ENCODE measurements at regions of chr12 and their contacts with region 1.

Region 1: GRCh38 chr12:62259993-62260732 is at the start of gene USP15:
- DNase-seq: peak; percentile 98
- H3K4me3 ChIP-seq: peak within 1 kb of the TSS; percentile 72 to 93 (median 89)
- H3K27ac ChIP-seq: peak within 1 kb of the TSS; percentile 86 to 94 (median 90)
- H3K4me1 ChIP-seq: peaks cover 0 to 46% (median 33%) of the 10 kb centered on the region in 4 donors
- H3K27me3 ChIP-seq: no peaks in the 10 kb centered on the region
- CTCF ChIP-seq: peak; percentile 22 to 56 (median 51)
- EP300 ChIP-seq: peak in 1 of 4 donors; percentile 46
- POLR2A ChIP-seq: peak; percentile 25 to 44
- total RNA-seq, gene USP15: 63.7 to 78.4 (median 73.1) TPM

Region 2: GRCh38 chr12:62044450-62045135 is 215.6 kb before region 1 on chr12:
- intact Hi-C with region 1: no loop called
- DNase-seq: no peak
- H3K4me3 ChIP-seq: no peak overlapping the region
- H3K27ac ChIP-seq: no peak overlapping the region
- H3K4me1 ChIP-seq: no peaks in the 10 kb centered on the region
- H3K27me3 ChIP-seq: no peaks in the 10 kb centered on the region
- CTCF ChIP-seq: no peak
- EP300 ChIP-seq: no peak
- POLR2A ChIP-seq: no peak

Region 3: DNA sequence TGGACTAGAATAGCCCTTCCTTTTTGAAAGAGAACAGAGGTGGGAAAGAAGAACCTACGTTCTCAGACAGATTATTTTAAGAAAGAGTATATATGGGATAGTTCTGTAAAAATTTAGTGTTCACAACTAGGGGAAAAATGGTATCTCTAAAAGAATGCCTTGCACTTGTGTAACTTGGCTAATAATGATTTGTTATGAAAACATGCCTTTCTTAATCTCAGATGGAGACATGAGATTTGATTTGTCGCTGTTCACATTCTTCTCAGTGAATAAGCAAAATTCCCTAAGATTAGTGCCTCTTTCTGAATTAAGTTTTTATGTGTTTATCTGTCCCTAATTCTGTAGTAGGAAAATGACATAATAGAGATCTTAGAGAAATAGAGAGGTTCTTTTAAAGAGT is 100.9 kb after region 1 on chr12:
- intact Hi-C with region 1: loop called (anchors 10 kb)
- DNase-seq: no peak
- H3K4me3 ChIP-seq: no peak overlapping the region
- H3K27ac ChIP-seq: no peak overlapping the region
- H3K4me1 ChIP-seq: no peaks in the 10 kb centered on the region
- H3K27me3 ChIP-seq: no peaks in the 10 kb centered on the region
- CTCF ChIP-seq: no peak
- EP300 ChIP-seq: no peak
- POLR2A ChIP-seq: no peak

Region 4: DNA sequence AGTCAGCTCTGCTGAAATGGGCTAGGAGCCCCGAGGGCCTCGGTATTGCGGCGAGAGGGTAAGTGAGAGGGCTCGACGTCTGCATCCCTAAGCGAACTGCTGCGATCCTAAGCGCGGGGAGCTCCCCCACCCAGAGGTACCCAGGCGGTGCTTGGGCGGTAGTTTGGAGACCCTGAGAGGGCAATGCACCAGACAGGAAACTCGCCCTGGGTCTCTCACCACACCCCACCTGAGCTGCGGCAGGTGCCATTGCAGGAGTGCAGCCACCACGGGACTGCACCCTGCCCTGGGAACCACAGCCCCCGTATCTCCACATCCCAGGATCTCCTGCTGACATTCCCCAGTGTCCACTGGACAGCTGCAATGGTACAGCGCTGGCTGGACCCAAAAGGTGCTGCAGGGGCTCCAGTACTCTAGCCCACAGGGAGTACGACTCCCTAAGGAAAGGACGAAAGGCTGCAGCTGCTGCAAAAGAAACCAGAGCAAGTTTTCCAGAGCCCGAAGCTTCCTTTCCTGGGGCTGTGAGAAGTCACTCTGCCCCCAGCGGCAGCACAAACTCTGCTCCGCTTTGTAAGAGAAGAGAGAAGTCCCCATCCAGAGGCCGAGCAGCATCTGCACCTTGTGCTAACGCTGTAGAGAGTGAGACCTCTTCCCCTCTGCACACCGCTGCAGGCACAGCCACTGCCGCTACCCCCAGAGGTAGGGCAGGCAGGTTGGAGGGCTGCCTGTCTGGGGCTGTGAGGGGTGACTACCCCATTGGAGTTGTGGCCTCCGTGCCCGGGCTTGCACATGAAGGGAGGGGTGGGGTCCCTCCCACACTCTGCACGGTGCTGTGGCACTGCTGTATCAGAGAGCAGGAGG is 175.4 kb after region 1 on chr12:
- intact Hi-C with region 1: no loop called
- DNase-seq: peak; percentile 65
- H3K4me3 ChIP-seq: peak overlapping the region; percentile 19 to 50 (median 42)
- H3K27ac ChIP-seq: no peak overlapping the region
- H3K4me1 ChIP-seq: peaks cover 0 to 15% (median 7%) of the 10 kb centered on the region in 4 donors
- H3K27me3 ChIP-seq: peaks cover 5 to 22% (median 11%) of the 10 kb centered on the region in 3 donors
- CTCF ChIP-seq: peak in 2 of 4 experiments; percentile 17 to 25
- EP300 ChIP-seq: no peak
- POLR2A ChIP-seq: no peak

Region 5: GRCh38 chr12:62466594-62467491 is 206.7 kb after region 1 on chr12 and contains the start of gene MON2:
- intact Hi-C with region 1: loop called (anchors 2 kb)
- DNase-seq: peak; percentile 92
- H3K4me3 ChIP-seq: peak within 1 kb of the TSS; percentile 62 to 95 (median 91)
- H3K27ac ChIP-seq: peak within 1 kb of the TSS; percentile 84 to 94 (median 92)
- H3K4me1 ChIP-seq: peaks cover 0 to 32% (median 24%) of the 10 kb centered on the region in 4 donors
- H3K27me3 ChIP-seq: no peaks in the 10 kb centered on the region
- CTCF ChIP-seq: no peak
- EP300 ChIP-seq: no peak
- POLR2A ChIP-seq: peak in 1 of 2 donors; percentile 43
- total RNA-seq, gene MON2: 57.1 to 92.0 (median 68.2) TPM

Region 6: GRCh38 chr12:62873116-62873742 is 613.1 kb after region 1 on chr12:
- intact Hi-C with region 1: no loop called
- DNase-seq: no peak
- H3K4me3 ChIP-seq: no peak overlapping the region
- H3K27ac ChIP-seq: no peak overlapping the region
- H3K4me1 ChIP-seq: no peaks in the 10 kb centered on the region
- H3K27me3 ChIP-seq: no peaks in the 10 kb centered on the region
- CTCF ChIP-seq: no peak
- EP300 ChIP-seq: no peak
- POLR2A ChIP-seq: no peak